ENCODE measurements at regions of chr20 and their contacts with region 1.

Region 1: DNA sequence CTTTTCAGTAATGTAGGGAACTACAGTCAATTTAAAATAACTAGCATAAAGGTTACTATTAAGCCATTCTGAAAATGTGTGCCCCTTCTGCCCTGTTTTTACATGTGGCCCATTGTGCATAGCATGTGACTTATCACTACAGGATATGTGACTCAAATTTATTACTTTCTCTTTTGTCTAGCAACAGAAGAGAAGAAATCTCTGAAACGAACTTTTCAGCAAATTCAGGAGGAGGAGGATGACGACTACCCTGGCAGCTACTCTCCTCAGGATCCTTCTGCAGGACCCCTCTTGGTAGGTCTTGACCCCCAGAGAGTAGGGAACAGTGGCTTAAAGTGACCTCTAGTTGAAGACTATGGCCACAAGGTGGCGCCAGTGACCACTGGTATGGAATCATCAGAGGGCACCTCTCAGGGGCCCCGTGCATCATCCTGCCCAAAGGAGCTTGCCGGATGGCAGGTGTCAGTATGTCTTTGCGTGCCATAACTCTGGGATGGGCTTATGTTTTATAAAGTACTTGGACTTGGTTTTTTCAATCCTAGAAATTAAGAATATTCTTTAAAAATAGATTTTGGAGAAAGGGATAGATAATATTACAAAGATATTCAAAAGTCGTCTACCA is 23.9 kb downstream of the RPRD1B start:
- DNase-seq: peak; percentile 73
- ATAC-seq: peak; percentile 97
- H3K4me3 Mint-ChIP-seq: no peak overlapping the region
- H3K27ac Mint-ChIP-seq: peak overlapping the region; percentile 80
- H3K4me1 Mint-ChIP-seq: peaks cover 14% of the 10 kb centered on the region
- H3K27me3 Mint-ChIP-seq: no peaks in the 10 kb centered on the region
- CTCF ChIP-seq: peak; percentile 98

Region 2: DNA sequence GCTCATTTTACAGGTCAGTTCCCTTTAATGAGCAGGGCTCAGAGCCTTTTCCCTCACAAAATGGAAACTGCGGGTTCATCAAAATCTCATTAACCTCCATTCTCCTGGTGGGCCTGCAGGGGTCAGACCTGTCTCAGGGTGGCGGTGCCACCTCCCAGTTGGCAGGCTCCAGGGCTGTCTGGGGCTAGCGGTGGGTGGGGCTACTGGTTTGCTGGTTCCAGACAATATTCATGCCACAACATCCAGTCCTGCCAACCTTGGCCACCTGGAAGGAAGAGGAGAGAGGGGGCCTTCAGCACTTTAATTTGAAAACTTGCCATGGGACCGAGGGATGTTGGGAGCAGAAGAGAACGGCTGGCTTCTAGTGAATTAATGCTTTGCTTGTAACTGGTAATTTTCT is 405.5 kb before region 1 on chr20:
- CTCF ChIA-PET with region 1: no interaction called
- POLR2A ChIA-PET with region 1: no interaction called
- intact Hi-C with region 1: loop called (anchors 5 kb)
- DNase-seq: no peak
- ATAC-seq: peak; percentile 75
- H3K4me3 Mint-ChIP-seq: no peak overlapping the region
- H3K27ac Mint-ChIP-seq: no peak overlapping the region
- H3K4me1 Mint-ChIP-seq: no peaks in the 10 kb centered on the region
- H3K27me3 Mint-ChIP-seq: peaks cover 12% of the 10 kb centered on the region
- CTCF ChIP-seq: no peak

Region 3: GRCh38 chr20:37833221-37833896 is 224.1 kb before region 1 on chr20:
- CTCF ChIA-PET with region 1: no interaction called
- POLR2A ChIA-PET with region 1: no interaction called
- intact Hi-C with region 1: no loop called
- DNase-seq: no peak
- ATAC-seq: no peak
- H3K4me3 Mint-ChIP-seq: no peak overlapping the region
- H3K27ac Mint-ChIP-seq: no peak overlapping the region
- H3K4me1 Mint-ChIP-seq: peaks cover 15% of the 10 kb centered on the region
- H3K27me3 Mint-ChIP-seq: no peaks in the 10 kb centered on the region
- CTCF ChIP-seq: no peak

Region 4: GRCh38 chr20:38073307-38074071 is 16.0 kb after region 1 on chr20:
- CTCF ChIA-PET with region 1: interaction called, 69 read pairs
- POLR2A ChIA-PET with region 1: interaction called, 4 read pairs
- intact Hi-C with region 1: loop called (anchors 1 kb)
- DNase-seq: no peak
- ATAC-seq: peak; percentile 55
- H3K4me3 Mint-ChIP-seq: peak overlapping the region; percentile 22
- H3K27ac Mint-ChIP-seq: peak overlapping the region; percentile 65
- H3K4me1 Mint-ChIP-seq: peaks cover 56% of the 10 kb centered on the region
- H3K27me3 Mint-ChIP-seq: no peaks in the 10 kb centered on the region
- CTCF ChIP-seq: peak; percentile 34

Region 5: GRCh38 chr20:38113401-38114325 is 56.2 kb after region 1 on chr20:
- CTCF ChIA-PET with region 1: interaction called, 26 read pairs
- POLR2A ChIA-PET with region 1: interaction called, 3 read pairs
- intact Hi-C with region 1: loop called (anchors 1 kb)
- DNase-seq: no peak
- ATAC-seq: peak; percentile 40
- H3K4me3 Mint-ChIP-seq: no peak overlapping the region
- H3K27ac Mint-ChIP-seq: no peak overlapping the region
- H3K4me1 Mint-ChIP-seq: peaks cover 6% of the 10 kb centered on the region
- H3K27me3 Mint-ChIP-seq: no peaks in the 10 kb centered on the region
- CTCF ChIP-seq: no peak

Region 6: GRCh38 chr20:38165089-38165989 is 107.9 kb after region 1 on chr20 and contains the start of gene TGM2:
- CTCF ChIA-PET with region 1: interaction called, 38 read pairs
- POLR2A ChIA-PET with region 1: no interaction called
- intact Hi-C with region 1: loop called (anchors 1 kb)
- DNase-seq: peak; percentile 74
- ATAC-seq: peak; percentile 94
- H3K4me3 Mint-ChIP-seq: peak within 1 kb of the TSS; percentile 75
- H3K27ac Mint-ChIP-seq: no peak within 1 kb of the TSS
- H3K4me1 Mint-ChIP-seq: peaks cover 29% of the 10 kb centered on the region
- H3K27me3 Mint-ChIP-seq: no peaks in the 10 kb centered on the region
- CTCF ChIP-seq: no peak
- total RNA-seq, gene TGM2: 20.8 and 22.9 TPM in 2 replicates

Region 7: DNA sequence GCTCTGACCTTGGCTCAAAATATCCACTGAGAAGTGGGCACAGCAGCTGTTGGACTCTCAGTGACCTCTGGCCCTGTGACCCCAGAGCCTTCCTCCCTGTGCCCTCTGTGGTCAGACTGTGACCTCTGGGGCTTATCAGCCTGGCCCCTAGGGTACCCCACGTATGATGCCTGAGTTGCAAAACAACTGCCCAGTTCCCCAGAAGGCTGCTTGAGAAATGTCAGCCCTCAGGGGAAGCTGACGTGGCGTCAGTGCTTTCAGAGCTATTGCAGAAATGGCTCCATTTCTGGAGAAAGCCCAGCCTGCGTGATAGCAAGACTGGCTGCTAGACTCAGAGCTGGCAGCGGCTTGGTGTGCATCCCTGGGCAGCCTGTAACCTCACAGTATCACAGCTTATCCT is 139.1 kb after region 1 on chr20:
- CTCF ChIA-PET with region 1: interaction called, 15 read pairs
- POLR2A ChIA-PET with region 1: no interaction called
- intact Hi-C with region 1: no loop called
- DNase-seq: peak; percentile 23
- ATAC-seq: peak; percentile 88
- H3K4me3 Mint-ChIP-seq: no peak overlapping the region
- H3K27ac Mint-ChIP-seq: no peak overlapping the region
- H3K4me1 Mint-ChIP-seq: peaks cover 22% of the 10 kb centered on the region
- H3K27me3 Mint-ChIP-seq: peaks cover 8% of the 10 kb centered on the region
- CTCF ChIP-seq: no peak

Region 8: DNA sequence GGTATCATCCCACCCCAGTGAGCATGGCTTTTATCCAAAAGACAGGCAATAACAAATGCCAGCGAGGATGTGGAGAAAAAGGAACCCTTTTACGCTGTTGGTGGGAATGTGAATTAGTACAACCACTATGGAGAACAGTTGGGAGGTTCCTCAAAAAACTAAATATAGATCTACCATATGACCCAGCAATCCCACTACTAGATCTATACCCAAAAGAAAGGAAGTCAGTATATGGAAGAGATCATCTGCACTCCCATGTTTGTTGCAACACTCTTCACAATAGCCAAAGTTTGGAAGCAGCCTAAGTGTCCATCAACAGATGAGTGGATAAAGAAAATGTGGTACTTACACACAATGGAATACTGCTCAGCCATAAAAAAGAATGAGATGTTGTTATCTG is 209.0 kb after region 1 on chr20:
- CTCF ChIA-PET with region 1: no interaction called
- POLR2A ChIA-PET with region 1: no interaction called
- intact Hi-C with region 1: no loop called
- DNase-seq: no peak
- ATAC-seq: no peak
- H3K4me3 Mint-ChIP-seq: no peak overlapping the region
- H3K27ac Mint-ChIP-seq: no peak overlapping the region
- H3K4me1 Mint-ChIP-seq: no peaks in the 10 kb centered on the region
- H3K27me3 Mint-ChIP-seq: peaks cover 31% of the 10 kb centered on the region
- CTCF ChIP-seq: no peak

Region 9: GRCh38 chr20:38355151-38356012 is 297.9 kb after region 1 on chr20:
- CTCF ChIA-PET with region 1: interaction called, 3 read pairs
- POLR2A ChIA-PET with region 1: no interaction called
- intact Hi-C with region 1: loop called (anchors 1 kb)
- DNase-seq: no peak
- ATAC-seq: no peak
- H3K4me3 Mint-ChIP-seq: no peak overlapping the region
- H3K27ac Mint-ChIP-seq: no peak overlapping the region
- H3K4me1 Mint-ChIP-seq: no peaks in the 10 kb centered on the region
- H3K27me3 Mint-ChIP-seq: no peaks in the 10 kb centered on the region
- CTCF ChIP-seq: no peak

Measured in activated B cell treated with CpG ODN at 0.5 μM for 24 hours (primary cell).